Breast epithelium (tissue), 4 donors: ENCODE measurements at regions of chr3 and their contacts with region 1.

Region 1: GRCh38 chr3:26345613-26346012 is 277.0 kb upstream of the LRRC3B start:
- DNase-seq: no peak
- H3K4me3 ChIP-seq: no peak overlapping the region
- H3K27ac ChIP-seq: no peak overlapping the region
- H3K4me1 ChIP-seq: no peaks in the 10 kb centered on the region
- H3K27me3 ChIP-seq: no peaks in the 10 kb centered on the region
- CTCF ChIP-seq: no peak
- POLR2A ChIP-seq: no peak

Region 2: DNA sequence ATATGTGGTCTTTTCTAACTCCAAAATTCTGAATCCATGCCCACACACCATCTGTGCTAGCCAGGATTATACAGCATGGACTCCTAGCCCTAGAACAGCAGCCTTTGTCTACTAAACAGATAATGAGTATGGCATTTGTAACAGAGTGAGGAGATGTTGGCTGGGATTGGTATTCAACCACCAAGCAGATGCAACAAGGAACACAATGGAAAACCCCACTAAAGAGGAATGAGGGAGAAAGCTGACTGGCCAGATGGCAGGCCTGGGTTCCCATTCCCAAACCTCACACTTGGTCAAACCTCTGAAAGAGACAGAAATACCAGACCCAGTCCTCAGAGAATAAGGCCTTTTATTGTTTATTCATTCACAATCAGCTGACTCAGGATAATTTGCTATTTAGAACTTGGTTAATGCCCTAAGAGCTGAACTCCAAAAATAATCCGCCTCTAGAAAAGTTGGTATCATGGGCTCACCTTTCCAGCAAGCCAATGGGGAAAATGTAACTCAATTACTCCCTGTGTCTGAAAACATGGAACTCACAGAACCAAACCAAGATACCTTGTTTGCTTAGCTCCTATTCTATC is 422.5 kb after region 1 on chr3:
- intact Hi-C with region 1: loop called (anchors 5 kb)
- DNase-seq: no peak
- H3K4me3 ChIP-seq: no peak overlapping the region
- H3K27ac ChIP-seq: no peak overlapping the region
- H3K4me1 ChIP-seq: no peaks in the 10 kb centered on the region
- H3K27me3 ChIP-seq: no peaks in the 10 kb centered on the region
- CTCF ChIP-seq: no peak
- POLR2A ChIP-seq: no peak